ENCODE measurements at regions of chr14 and their contacts with region 1.

Region 1: GRCh38 chr14:39157491-39157890 is 12.6 kb downstream of the TRAPPC6B start:
- DNase-seq: no peak
- H3K4me3 ChIP-seq: no peak overlapping the region
- H3K27ac ChIP-seq: no peak overlapping the region
- H3K4me1 ChIP-seq: no peaks in the 10 kb centered on the region
- H3K27me3 ChIP-seq: no peaks in the 10 kb centered on the region
- CTCF ChIP-seq: no peak
- EP300 ChIP-seq: no peak
- POLR2A ChIP-seq: no peak
- RAD21 ChIP-seq: no peak

Region 2: DNA sequence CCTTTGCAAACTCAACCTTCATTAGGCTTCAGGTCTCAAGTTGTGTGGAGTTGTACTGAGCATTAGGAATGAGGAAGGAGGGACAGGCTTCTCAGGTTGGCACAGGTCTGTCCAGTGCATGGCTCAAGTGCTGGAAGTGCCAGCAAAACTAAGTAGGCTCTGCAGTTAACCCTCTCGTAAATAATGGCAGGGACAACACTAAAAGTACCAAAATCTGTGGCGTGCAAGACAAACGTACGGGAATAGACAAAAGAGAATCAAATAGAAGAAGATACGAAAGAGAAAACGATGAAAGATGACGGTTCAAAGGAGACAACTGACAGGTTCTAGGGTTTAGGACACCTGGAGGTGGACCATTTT is 12.0 kb after region 1 on chr14:
- CTCF ChIA-PET with region 1: no interaction called
- POLR2A ChIA-PET with region 1: interaction called, 44 read pairs
- DNase-seq: no peak
- H3K4me3 ChIP-seq: peak overlapping the region; percentile 81 to 95 (median 92)
- H3K27ac ChIP-seq: peak overlapping the region; percentile 86
- H3K4me1 ChIP-seq: peaks cover 3 to 6% (median 5%) of the 10 kb centered on the region in 4 experiments; a peak in 6 of 7 replicates
- H3K27me3 ChIP-seq: no peaks in the 10 kb centered on the region
- CTCF ChIP-seq: no peak
- EP300 ChIP-seq: no peak
- POLR2A ChIP-seq: no peak
- RAD21 ChIP-seq: no peak

Measured in H1 (cell line).